ENCODE measurements at regions of chr13 and their contacts with region 1.

Region 1: GRCh38 chr13:89066868-89067466 is 1395.8 kb downstream of the SLITRK5 start:
- ATAC-seq: peak in 4 of 8 experiments; percentile 57 to 92 (median 60)
- H3K4me3 ChIP-seq: no peak overlapping the region
- H3K27ac ChIP-seq: no peak overlapping the region
- H3K4me1 ChIP-seq: no peaks in the 10 kb centered on the region

Region 2: DNA sequence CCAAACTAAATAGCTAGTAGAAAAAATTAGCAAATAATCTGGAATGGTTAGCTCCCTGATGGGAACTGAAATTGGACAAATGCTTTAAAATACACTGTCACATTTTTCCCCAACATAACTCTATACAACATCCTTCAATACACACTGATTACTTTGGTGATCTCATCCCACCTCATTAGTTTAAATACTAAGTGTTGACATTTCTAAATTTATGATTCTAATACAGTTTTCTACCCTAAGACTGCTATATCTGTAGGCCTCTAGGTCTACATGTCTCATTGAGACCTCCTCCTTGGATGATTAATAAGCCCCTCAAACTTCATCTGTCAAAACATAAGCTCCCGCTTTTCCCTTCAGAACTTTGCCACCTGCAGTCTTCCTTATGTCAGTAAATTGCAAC is 1476.4 kb before region 1 on chr13:
- in situ Hi-C with region 1: no loop called
- ATAC-seq: peak in 3 of 8 experiments; percentile 43 to 63 (median 61)
- H3K4me3 ChIP-seq: no peak overlapping the region
- H3K27ac ChIP-seq: no peak overlapping the region
- H3K4me1 ChIP-seq: no peaks in the 10 kb centered on the region

Region 3: GRCh38 chr13:88958821-88959220 is 108.1 kb before region 1 on chr13:
- in situ Hi-C with region 1: loop called in 1 of 9 experiments (anchors 25 kb)
- ATAC-seq: no peak
- H3K4me3 ChIP-seq: no peak overlapping the region
- H3K27ac ChIP-seq: no peak overlapping the region
- H3K4me1 ChIP-seq: no peaks in the 10 kb centered on the region

Region 4: GRCh38 chr13:89375839-89376238 is 308.9 kb after region 1 on chr13:
- in situ Hi-C with region 1: no loop called
- ATAC-seq: no peak
- H3K4me3 ChIP-seq: no peak overlapping the region
- H3K27ac ChIP-seq: no peak overlapping the region
- H3K4me1 ChIP-seq: no peaks in the 10 kb centered on the region

Measured in motor neuron (in vitro differentiated cells).